Mammary epithelial cell (primary cell): ENCODE measurements at regions of chr18 and their contacts with region 1.

Region 1: GRCh38 chr18:267688-268552 is at the start of gene THOC1:
- DNase-seq: peak; percentile 93
- H3K4me3 ChIP-seq: peak within 1 kb of the TSS; percentile 76 to 85 (median 79)
- H3K27ac ChIP-seq: peak within 1 kb of the TSS; percentile 97
- H3K4me1 ChIP-seq: peaks cover 16% of the 10 kb centered on the region
- H3K27me3 ChIP-seq: no peaks in the 10 kb centered on the region
- CTCF ChIP-seq: no peak
- total RNA-seq, gene THOC1: 30.2 to 33.2 TPM

Region 2: GRCh38 chr18:158128-159036 is 109.5 kb before region 1 on chr18 and contains the start of gene USP14:
- CTCF ChIA-PET with region 1: no interaction called
- dilution Hi-C with region 1: no loop called
- in situ Hi-C with region 1: no loop called
- intact Hi-C with region 1: loop called (anchors 5 kb)
- DNase-seq: peak; percentile 95
- H3K4me3 ChIP-seq: peak within 1 kb of the TSS; percentile 72 to 99 (median 85)
- H3K27ac ChIP-seq: peak within 1 kb of the TSS; percentile 93
- H3K4me1 ChIP-seq: peaks cover 8% of the 10 kb centered on the region
- H3K27me3 ChIP-seq: no peaks in the 10 kb centered on the region
- CTCF ChIP-seq: peak in 1 of 2 donors; percentile 3
- total RNA-seq, gene USP14: 29.0 to 97.3 TPM

Region 3: GRCh38 chr18:306608-307255 is 38.8 kb after region 1 on chr18:
- CTCF ChIA-PET with region 1: no interaction called
- dilution Hi-C with region 1: no loop called
- in situ Hi-C with region 1: no loop called
- intact Hi-C with region 1: no loop called
- DNase-seq: no peak
- H3K4me3 ChIP-seq: no peak overlapping the region
- H3K27ac ChIP-seq: no peak overlapping the region
- H3K4me1 ChIP-seq: no peaks in the 10 kb centered on the region
- H3K27me3 ChIP-seq: no peaks in the 10 kb centered on the region
- CTCF ChIP-seq: no peak

Region 4: GRCh38 chr18:596288-596881 is 328.5 kb after region 1 on chr18:
- CTCF ChIA-PET with region 1: no interaction called
- dilution Hi-C with region 1: no loop called
- in situ Hi-C with region 1: no loop called
- intact Hi-C with region 1: loop called (anchors 2 kb)
- DNase-seq: peak; percentile 41
- H3K4me3 ChIP-seq: peak overlapping the region; percentile 6 to 34 (median 31)
- H3K27ac ChIP-seq: no peak overlapping the region
- H3K4me1 ChIP-seq: peaks cover 4% of the 10 kb centered on the region
- H3K27me3 ChIP-seq: no peaks in the 10 kb centered on the region
- CTCF ChIP-seq: no peak

Region 5: DNA sequence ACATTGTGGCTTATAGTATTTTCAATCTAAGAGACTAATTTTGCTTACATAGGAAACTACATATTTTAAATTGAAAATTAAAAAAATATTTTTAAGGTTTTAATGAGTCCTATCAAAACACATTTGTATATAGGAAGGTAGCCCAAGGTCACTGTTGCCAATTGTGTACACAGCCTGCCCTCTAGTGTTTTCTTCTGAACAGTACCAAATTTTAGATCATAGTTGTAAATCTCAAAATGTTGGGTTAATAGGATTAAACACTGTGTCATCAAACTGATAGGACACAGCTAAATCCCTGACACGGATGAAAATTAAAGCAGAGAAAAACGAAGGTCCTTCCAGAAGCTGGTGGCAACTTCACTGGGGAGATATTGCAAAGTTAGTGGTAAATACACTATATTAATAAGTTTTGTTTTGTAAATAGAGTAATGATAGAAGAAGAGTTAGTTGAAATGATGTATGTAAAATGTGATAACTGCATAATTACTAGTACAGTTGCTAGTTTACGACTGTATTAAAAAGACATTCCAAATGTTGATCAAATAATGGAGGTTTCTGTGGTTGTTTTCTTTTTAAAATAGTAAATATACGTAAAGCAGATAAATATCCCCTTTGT is 348.6 kb after region 1 on chr18:
- CTCF ChIA-PET with region 1: no interaction called
- dilution Hi-C with region 1: no loop called
- in situ Hi-C with region 1: no loop called
- intact Hi-C with region 1: loop called (anchors 5 kb)
- DNase-seq: peak; percentile 20
- H3K4me3 ChIP-seq: no peak overlapping the region
- H3K27ac ChIP-seq: no peak overlapping the region
- H3K4me1 ChIP-seq: no peaks in the 10 kb centered on the region
- H3K27me3 ChIP-seq: no peaks in the 10 kb centered on the region
- CTCF ChIP-seq: peak; percentile 61 to 67

Region 6: DNA sequence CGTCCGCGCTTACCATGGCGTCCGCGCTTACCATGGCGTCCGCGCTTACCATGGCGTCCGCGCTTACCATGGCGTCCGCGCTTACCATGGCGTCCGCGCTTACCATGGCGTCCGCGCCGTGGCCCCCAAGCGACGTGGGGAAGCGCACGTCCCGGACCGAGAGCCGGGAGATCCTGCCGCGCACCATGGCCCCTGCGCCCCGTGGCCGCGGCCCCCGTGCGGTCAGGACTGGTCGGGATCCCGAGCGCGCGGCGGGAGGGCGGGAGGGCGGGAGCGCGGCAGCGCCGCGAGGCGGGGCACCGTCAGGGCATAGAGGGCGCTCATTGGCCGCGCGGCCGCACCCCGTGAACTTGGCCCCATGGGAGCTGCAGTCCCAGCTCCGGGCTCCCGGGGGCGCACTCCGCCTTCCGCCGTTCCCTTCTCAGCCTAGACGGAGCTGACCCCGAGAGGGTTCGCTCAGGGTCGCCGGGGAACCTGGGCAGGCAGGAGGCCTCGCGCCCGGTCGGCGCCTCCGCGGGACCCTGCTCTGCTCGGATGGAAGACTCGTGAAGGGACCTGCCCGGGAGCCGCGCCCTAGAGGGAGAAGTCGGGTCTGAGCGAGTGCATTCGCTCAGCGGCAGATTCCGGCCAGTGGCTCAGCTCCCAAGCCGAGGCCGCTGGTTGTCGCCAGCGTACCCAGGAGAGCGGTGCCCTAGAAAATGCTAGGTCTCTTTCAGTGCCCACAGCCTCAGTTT is 444.6 kb after region 1 on chr18 and contains the start of gene ENOSF1:
- CTCF ChIA-PET with region 1: no interaction called
- dilution Hi-C with region 1: no loop called
- in situ Hi-C with region 1: no loop called
- intact Hi-C with region 1: loop called (anchors 10 kb)
- DNase-seq: peak; percentile 73
- H3K4me3 ChIP-seq: peak within 1 kb of the TSS; percentile 62 to 92 (median 78)
- H3K27ac ChIP-seq: peak within 1 kb of the TSS; percentile 88
- H3K4me1 ChIP-seq: peaks cover 12% of the 10 kb centered on the region
- H3K27me3 ChIP-seq: no peaks in the 10 kb centered on the region
- CTCF ChIP-seq: peak; percentile 54 to 81
- total RNA-seq, gene ENOSF1: 24.5 to 78.7 TPM

Region 7: GRCh38 chr18:839224-840022 is 571.5 kb after region 1 on chr18:
- CTCF ChIA-PET with region 1: no interaction called
- dilution Hi-C with region 1: no loop called
- in situ Hi-C with region 1: no loop called
- intact Hi-C with region 1: loop called (anchors 10 kb)
- DNase-seq: peak; percentile 62
- H3K4me3 ChIP-seq: no peak overlapping the region
- H3K27ac ChIP-seq: no peak overlapping the region
- H3K4me1 ChIP-seq: no peaks in the 10 kb centered on the region
- H3K27me3 ChIP-seq: no peaks in the 10 kb centered on the region
- CTCF ChIP-seq: peak; percentile 97 to 99